H1 (cell line): ENCODE measurements at regions of chr19 and their contacts with region 1.

Region 1: DNA sequence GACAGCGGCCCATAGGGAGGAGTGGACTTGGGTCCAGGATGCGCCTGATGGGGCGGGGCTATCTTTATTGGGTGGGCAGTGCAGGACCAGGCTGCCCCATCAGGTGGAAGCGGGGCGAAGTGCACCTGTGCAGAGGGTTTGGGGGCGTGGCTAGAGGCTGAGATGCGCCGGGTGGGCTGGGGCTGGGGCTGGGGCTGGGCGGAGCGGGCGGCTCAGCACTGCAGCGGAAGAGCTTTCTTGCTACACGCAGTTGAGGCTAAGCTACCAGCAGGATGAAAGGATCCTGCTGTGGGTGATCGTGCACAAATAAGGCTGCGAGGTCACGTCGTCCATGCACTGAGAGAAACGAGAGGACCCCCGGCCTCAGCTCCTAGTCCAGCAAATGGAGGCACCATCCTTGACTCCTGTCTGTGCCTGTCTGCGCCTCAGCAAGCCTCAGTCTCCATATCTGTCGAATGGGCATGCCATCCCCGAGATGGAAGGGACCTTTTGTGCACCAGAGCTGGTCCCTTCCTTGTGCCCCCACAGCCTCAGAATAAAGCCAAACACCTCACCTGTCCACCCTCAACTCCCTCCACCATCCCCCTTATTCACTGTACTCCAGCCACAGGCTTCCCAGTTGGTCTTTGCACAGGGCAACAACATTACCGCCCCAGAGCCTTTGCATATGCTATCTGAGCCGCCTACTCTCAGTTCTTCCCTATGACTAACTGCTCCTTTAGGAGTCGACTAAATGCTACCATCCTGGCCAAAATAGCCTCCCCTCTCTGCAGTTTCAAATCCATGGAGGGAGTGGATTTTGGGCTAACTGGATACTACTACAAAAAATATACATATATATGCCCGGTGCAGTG is 21.0 kb upstream of the HOMER3 start:
- DNase-seq: peak; percentile 78 to 92
- H3K4me3 ChIP-seq: peak overlapping the region in 1 of 4 experiments; percentile 15; a peak in 3 of 8 replicates
- H3K27ac ChIP-seq: no peak overlapping the region
- H3K4me1 ChIP-seq: peaks cover 0 to 5% (median 2%) of the 10 kb centered on the region in 4 experiments; a peak in 3 of 7 replicates
- H3K27me3 ChIP-seq: no peaks in the 10 kb centered on the region
- CTCF ChIP-seq: peak; percentile 32 to 51 (median 47)
- EP300 ChIP-seq: no peak
- POLR2A ChIP-seq: peak in 1 of 2 experiments; percentile 43; a peak in 1 of 3 replicates
- RAD21 ChIP-seq: peak; percentile 33 to 45; a peak in 3 of 4 replicates

Region 2: DNA sequence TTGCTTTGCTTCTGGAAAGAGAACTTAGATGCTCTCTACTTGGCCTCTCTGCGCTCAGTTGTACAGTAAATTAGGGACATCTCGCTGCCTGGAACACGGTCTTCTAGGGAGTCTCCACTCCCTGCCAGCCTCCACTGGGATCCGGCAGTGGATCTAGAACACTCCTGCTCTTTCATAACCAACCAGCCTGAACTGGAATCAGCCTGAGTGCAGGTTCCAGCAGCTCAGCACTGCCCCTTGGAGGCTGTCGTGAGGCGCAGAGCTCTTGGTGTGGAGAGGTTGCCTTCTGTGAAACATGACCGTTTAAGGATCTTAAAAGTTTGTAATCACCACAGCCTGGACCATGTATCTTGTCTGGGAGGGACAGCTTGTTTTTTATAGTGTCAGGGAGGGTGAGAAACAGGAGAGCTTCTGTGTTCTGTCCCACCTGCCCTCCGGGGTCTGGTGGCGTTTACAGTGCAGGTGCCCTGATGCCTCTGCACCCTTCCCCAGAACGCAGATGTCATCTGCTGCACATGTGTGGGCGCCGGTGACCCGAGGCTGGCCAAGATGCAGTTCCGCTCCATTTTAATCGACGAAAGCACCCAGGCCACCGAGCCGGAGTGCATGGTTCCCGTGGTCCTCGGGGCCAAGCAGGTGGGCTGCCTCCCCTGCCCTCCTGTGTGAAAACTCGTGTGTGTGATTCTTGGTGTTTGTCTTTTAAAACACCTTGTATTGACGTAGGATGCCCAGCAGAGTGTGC is 105.4 kb before region 1 on chr19:
- CTCF ChIA-PET with region 1: no interaction called
- POLR2A ChIA-PET with region 1: no interaction called
- DNase-seq: no peak
- H3K4me3 ChIP-seq: no peak overlapping the region
- H3K27ac ChIP-seq: no peak overlapping the region
- H3K4me1 ChIP-seq: no peaks in the 10 kb centered on the region
- H3K27me3 ChIP-seq: no peaks in the 10 kb centered on the region
- CTCF ChIP-seq: peak; percentile 41 to 63 (median 58); a peak in 3 of 4 replicates
- EP300 ChIP-seq: no peak
- POLR2A ChIP-seq: no peak
- RAD21 ChIP-seq: peak; percentile 40 to 51

Region 3: GRCh38 chr19:18886818-18887371 is 75.1 kb before region 1 on chr19:
- CTCF ChIA-PET with region 1: no interaction called
- POLR2A ChIA-PET with region 1: no interaction called
- DNase-seq: no peak
- H3K4me3 ChIP-seq: no peak overlapping the region
- H3K27ac ChIP-seq: no peak overlapping the region
- H3K4me1 ChIP-seq: no peaks in the 10 kb centered on the region
- H3K27me3 ChIP-seq: no peaks in the 10 kb centered on the region
- CTCF ChIP-seq: no peak
- EP300 ChIP-seq: no peak
- POLR2A ChIP-seq: no peak
- RAD21 ChIP-seq: no peak

Region 4: GRCh38 chr19:18940769-18941407 is 21.1 kb before region 1 on chr19 and contains the start of gene HOMER3:
- CTCF ChIA-PET with region 1: no interaction called
- POLR2A ChIA-PET with region 1: interaction called, 10 read pairs
- DNase-seq: peak in 1 of 2 experiments; percentile 85
- H3K4me3 ChIP-seq: peak within 1 kb of the TSS; percentile 45 to 77 (median 66)
- H3K27ac ChIP-seq: no peak within 1 kb of the TSS; the same call in 1 of the 2 replicates
- H3K4me1 ChIP-seq: peaks cover 5 to 18% (median 9%) of the 10 kb centered on the region in 4 experiments
- H3K27me3 ChIP-seq: no peaks in the 10 kb centered on the region
- CTCF ChIP-seq: peak in 2 of 3 experiments; percentile 40 to 42; a peak in 3 of 4 replicates
- EP300 ChIP-seq: no peak
- POLR2A ChIP-seq: no peak
- RAD21 ChIP-seq: no peak; a peak in 1 of 4 replicates
- total RNA-seq, gene HOMER3: 28.3 and 33.2 TPM in 2 replicates

Region 5: GRCh38 chr19:19010551-19010950 is 48.6 kb after region 1 on chr19:
- CTCF ChIA-PET with region 1: no interaction called
- POLR2A ChIA-PET with region 1: no interaction called
- DNase-seq: no peak
- H3K4me3 ChIP-seq: no peak overlapping the region
- H3K27ac ChIP-seq: no peak overlapping the region
- H3K4me1 ChIP-seq: no peaks in the 10 kb centered on the region
- H3K27me3 ChIP-seq: no peaks in the 10 kb centered on the region
- CTCF ChIP-seq: no peak
- EP300 ChIP-seq: no peak
- POLR2A ChIP-seq: no peak
- RAD21 ChIP-seq: no peak

Region 6: DNA sequence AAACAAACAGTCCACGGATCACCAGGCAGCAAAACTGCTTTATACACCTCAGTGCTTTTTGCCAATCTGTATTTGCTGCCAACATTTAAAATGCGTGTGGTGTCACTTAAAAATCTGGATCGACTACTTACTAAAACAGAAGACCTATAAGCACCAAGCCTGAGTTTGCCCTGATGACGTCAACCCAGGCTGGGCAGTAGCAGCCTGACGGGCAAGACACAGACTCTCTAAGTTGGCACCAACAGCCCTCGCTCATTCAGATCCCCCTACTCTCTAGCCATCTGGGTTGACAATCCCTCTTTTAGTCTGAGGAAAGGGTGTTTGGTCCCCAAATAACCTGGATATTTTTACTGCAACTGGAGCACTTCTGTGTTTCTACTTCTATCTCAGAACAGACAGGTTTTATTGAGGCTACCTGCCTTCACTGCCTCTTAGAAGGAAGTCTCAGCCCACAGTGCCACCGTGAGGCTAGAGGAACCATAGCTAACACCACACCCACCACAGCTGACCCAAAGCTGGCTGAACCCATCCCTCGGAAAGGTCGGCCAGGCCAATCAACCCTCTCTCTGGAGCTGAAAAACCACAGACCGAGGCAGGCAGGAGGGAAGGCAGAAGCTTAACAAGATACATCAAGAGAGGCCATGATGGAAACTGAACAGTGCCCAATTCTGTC is 64.4 kb after region 1 on chr19:
- CTCF ChIA-PET with region 1: no interaction called
- POLR2A ChIA-PET with region 1: no interaction called
- DNase-seq: no peak
- H3K4me3 ChIP-seq: no peak overlapping the region
- H3K27ac ChIP-seq: no peak overlapping the region
- H3K4me1 ChIP-seq: no peaks in the 10 kb centered on the region
- H3K27me3 ChIP-seq: no peaks in the 10 kb centered on the region
- CTCF ChIP-seq: peak in 1 of 3 experiments; percentile 24; a peak in 1 of 4 replicates
- EP300 ChIP-seq: no peak
- POLR2A ChIP-seq: no peak
- RAD21 ChIP-seq: no peak; a peak in 1 of 4 replicates